Posterior vena cava (tissue), 2 donors: ENCODE measurements at regions of chr2 and their contacts with region 1.

Region 1: GRCh38 chr2:11617946-11618707 is 51.9 kb downstream of the NTSR2 start:
- DNase-seq: peak; percentile 80

Region 2: DNA sequence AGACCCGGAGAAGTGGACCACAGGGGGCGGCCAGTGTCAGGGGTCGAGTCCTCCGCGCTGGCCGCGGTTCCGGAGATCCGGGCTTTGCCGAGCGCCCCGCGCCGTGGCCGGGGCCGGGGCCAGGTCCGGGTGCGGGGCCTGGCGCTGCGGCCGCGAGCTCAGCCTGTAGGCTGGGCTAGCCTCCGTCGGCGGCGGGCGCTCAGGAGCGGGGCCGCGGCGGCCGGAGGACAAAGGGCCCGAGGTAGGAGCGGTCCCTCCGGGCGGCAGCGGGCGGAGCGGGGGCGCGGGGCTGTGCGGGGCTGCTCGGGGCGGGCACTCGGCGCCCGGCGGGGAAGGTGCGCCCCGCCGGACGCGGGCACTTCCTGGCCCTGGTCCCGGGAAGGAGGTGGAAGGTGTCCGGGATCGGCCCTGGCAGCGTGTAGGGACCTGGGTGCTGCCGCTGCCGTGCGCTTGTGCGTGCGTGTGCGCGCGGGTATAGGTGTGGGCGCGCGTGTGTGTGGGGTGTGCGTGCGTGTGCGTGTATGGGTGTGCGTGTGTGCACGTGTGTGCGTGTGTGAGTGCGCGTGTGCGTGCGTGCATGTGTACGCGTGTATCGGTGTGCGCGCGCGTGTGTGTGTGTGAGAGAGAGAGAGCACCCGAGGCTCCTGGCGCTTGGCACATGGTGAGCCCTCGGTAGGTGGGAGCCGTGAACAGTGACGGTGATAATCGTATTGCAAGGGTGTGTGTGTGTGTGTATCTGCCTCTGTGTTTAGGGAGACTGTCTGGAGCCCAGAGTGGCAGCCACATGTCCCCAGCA is 135.2 kb before region 1 on chr2:
- intact Hi-C with region 1: no loop called
- DNase-seq: peak; percentile 81

Region 3: GRCh38 chr2:13616616-13617015 is 1998.5 kb after region 1 on chr2:
- intact Hi-C with region 1: loop called in 1 of 2 experiments (anchors 5 kb)
- DNase-seq: no peak